ENCODE measurements at regions of chr2 and their contacts with region 1.

Region 1: DNA sequence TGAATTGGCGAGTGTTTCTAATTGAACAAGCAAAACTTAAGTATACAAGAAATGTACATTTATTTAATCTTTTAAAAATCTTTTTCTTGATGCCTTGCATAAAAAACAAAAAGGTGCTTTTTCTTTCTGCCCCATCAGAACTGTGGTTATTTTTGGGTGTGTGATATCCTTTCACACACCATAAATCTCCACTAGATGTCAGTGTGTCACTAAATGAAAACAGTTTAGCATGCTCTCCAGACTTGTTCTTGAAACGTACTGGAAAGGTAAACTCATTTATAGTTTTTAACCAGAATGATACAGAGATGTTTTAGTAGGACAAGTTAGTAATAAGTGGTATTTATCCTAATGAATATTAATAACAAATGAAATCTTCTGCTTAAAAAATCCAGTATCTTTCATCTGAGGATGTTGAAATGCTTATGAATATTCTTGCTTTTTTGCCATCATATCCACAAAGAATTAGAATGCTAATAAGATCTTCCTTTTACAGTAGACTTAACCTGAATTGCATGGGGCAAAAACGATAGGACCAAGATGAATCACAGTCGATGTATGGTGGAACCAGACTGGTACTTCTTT is 96.8 kb downstream of the UBE2E3 start:
- DNase-seq: no peak
- H3K4me3 ChIP-seq: no peak overlapping the region
- H3K27ac ChIP-seq: no peak overlapping the region
- H3K4me1 ChIP-seq: peaks cover 0 to 5% (median 0%) of the 10 kb centered on the region in 4 donors
- H3K27me3 ChIP-seq: no peaks in the 10 kb centered on the region
- CTCF ChIP-seq: peak; percentile 57 to 70 (median 63)
- EP300 ChIP-seq: no peak
- POLR2A ChIP-seq: no peak

Region 2: DNA sequence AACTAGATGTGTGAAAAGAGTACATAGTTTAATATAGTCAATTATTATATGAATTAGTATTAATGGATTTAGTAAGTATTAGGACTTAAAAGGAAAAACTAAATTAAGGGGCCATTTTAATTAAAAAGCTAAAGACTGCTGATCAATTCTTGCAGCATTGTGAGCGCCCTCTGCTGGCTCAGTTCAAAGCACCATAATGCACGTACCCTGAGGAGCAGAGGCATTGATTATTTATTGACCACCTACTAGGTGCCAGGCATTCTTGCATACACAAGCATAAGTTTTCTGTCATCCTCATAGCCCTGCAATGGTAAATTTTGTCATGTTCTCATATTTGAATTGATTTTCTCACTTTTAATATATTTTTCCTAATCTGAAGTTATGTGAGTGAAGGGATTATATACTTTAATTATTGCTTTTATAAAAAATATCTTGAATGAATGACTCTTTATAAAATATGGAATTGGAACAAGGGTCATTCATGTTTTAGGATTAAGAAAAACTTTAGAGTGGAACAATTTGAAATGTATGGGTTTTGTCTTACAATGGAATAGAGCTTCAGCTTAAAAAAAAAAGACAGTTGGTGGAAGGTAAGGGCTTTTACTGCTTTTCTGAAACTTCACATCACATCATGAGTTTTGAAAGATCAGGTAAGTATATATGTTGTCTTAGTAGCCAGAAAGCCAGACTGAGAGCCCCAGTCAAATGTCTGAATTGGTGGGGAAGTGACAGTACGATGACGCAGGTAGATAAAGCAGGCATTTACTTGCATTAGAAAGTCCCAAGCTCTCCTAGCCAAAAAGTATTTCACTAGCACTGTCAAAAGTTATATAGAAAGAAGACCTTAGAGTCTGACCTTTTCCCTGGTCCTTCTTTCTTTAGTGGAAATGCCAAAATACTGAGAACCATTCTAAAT is 389.7 kb after region 1 on chr2:
- intact Hi-C with region 1: loop called (anchors 10 kb)
- DNase-seq: no peak
- H3K4me3 ChIP-seq: no peak overlapping the region
- H3K27ac ChIP-seq: no peak overlapping the region
- H3K4me1 ChIP-seq: no peaks in the 10 kb centered on the region
- H3K27me3 ChIP-seq: no peaks in the 10 kb centered on the region
- CTCF ChIP-seq: peak; percentile 53 to 77 (median 69)
- EP300 ChIP-seq: no peak
- POLR2A ChIP-seq: no peak